ENCODE measurements at regions of chr5 and their contacts with region 1.

Region 1: DNA sequence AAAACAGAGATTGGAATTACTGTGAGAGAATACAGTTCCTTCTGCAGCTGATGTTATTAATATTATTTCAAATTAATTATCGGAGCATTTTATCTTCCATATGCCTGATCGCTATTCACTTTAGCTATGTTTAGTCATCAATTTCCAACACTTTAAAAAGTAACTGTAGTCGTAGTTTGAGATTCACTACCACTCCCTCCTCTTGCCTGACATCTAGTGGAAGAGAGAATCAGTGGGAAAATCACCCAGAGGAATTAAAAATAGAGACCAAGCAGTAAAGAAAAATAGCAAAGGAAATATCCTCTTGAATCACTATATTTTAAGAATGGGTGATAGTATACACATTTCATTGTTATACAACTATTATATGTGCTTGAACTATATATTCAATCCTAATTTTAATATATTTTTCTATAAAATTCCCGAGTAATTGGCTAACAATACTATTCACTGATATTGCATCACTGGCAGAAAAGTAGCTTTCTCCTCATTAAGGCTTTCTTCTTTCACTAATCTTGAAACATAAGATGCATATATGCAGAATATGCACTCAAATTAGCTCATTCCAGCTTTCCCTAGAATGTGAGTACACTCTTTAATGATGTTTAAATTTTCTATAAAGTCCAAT is 708.7 kb downstream of the CDH9 start:
- DNase-seq: peak; percentile 66
- ATAC-seq: peak; percentile 51
- H3K4me3 ChIP-seq: no peak overlapping the region
- H3K27ac ChIP-seq: no peak overlapping the region
- H3K4me1 ChIP-seq: no peaks in the 10 kb centered on the region
- H3K27me3 ChIP-seq: no peaks in the 10 kb centered on the region
- CTCF ChIP-seq: peak; percentile 89

Region 2: GRCh38 chr5:25763781-25764180 is 565.9 kb before region 1 on chr5:
- CTCF ChIA-PET with region 1: no interaction called
- POLR2A ChIA-PET with region 1: no interaction called
- intact Hi-C with region 1: loop called (anchors 1 kb)
- DNase-seq: no peak
- ATAC-seq: 0 out of 2 replicates have a peak, but pooled peaks have one; percentile 27
- H3K4me3 ChIP-seq: no peak overlapping the region
- H3K27ac ChIP-seq: no peak overlapping the region
- H3K4me1 ChIP-seq: no peaks in the 10 kb centered on the region
- H3K27me3 ChIP-seq: no peaks in the 10 kb centered on the region
- CTCF ChIP-seq: no peak

Region 3: GRCh38 chr5:26024774-26025173 is 304.9 kb before region 1 on chr5:
- CTCF ChIA-PET with region 1: interaction called, 3 read pairs
- POLR2A ChIA-PET with region 1: no interaction called
- intact Hi-C with region 1: loop called (anchors 1 kb)
- DNase-seq: peak; percentile 43
- ATAC-seq: peak; percentile 73
- H3K4me3 ChIP-seq: no peak overlapping the region
- H3K27ac ChIP-seq: no peak overlapping the region
- H3K4me1 ChIP-seq: no peaks in the 10 kb centered on the region
- H3K27me3 ChIP-seq: no peaks in the 10 kb centered on the region
- CTCF ChIP-seq: peak; percentile 45; the same call in 1 of the 2 replicates

Region 4: GRCh38 chr5:26078041-26078440 is 251.6 kb before region 1 on chr5:
- CTCF ChIA-PET with region 1: interaction called, 10 read pairs
- POLR2A ChIA-PET with region 1: no interaction called
- intact Hi-C with region 1: no loop called
- DNase-seq: no peak
- ATAC-seq: no peak
- H3K4me3 ChIP-seq: no peak overlapping the region
- H3K27ac ChIP-seq: no peak overlapping the region
- H3K4me1 ChIP-seq: no peaks in the 10 kb centered on the region
- H3K27me3 ChIP-seq: no peaks in the 10 kb centered on the region
- CTCF ChIP-seq: no peak

Region 5: DNA sequence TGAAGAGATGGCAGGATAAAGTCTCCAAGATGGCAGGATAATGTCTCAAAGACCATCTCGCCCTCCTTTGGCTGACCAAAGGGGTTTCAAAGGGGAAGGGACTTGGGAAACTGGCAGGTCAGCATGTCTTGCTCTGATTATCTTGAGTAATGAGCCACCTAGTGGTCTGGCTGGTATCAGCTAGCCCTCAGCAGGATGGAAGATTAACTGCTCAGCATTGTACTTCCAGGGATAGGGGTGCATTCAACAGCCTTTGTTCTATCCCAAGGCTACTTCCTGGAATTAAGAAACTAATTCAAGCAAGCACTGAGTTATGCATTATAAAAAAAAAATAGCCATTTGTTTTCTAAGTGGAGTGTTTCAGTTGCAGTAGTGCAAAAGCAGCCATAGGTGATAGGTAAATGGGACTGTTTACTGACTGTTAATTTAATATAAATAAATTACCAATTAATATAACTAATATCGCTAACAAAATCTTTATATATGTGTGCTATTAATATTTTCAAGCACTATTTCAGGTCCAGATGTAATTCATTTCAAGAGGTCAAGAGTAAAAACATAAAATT is 153.2 kb after region 1 on chr5:
- CTCF ChIA-PET with region 1: no interaction called
- POLR2A ChIA-PET with region 1: no interaction called
- intact Hi-C with region 1: loop called (anchors 2 kb)
- DNase-seq: peak; percentile 71
- ATAC-seq: peak; percentile 100
- H3K4me3 ChIP-seq: peak overlapping the region; percentile 67
- H3K27ac ChIP-seq: no peak overlapping the region
- H3K4me1 ChIP-seq: no peaks in the 10 kb centered on the region
- H3K27me3 ChIP-seq: no peaks in the 10 kb centered on the region
- CTCF ChIP-seq: peak; percentile 90

Region 6: GRCh38 chr5:26700759-26701384 is 371.2 kb after region 1 on chr5:
- CTCF ChIA-PET with region 1: no interaction called
- POLR2A ChIA-PET with region 1: no interaction called
- intact Hi-C with region 1: loop called (anchors 1 kb)
- DNase-seq: peak; percentile 75
- ATAC-seq: peak; percentile 82
- H3K4me3 ChIP-seq: no peak overlapping the region
- H3K27ac ChIP-seq: no peak overlapping the region
- H3K4me1 ChIP-seq: no peaks in the 10 kb centered on the region
- H3K27me3 ChIP-seq: no peaks in the 10 kb centered on the region
- CTCF ChIP-seq: peak; percentile 89